Endothelial cell of umbilical vein (primary cell): ENCODE measurements at regions of chr7 and their contacts with region 1.

Region 1: GRCh38 chr7:81704595-81704994 is 65.3 kb downstream of the HGF start:
- DNase-seq: no peak
- H3K4me3 ChIP-seq: no peak overlapping the region
- H3K27ac ChIP-seq: no peak overlapping the region
- H3K4me1 ChIP-seq: peaks cover 3% of the 10 kb centered on the region
- H3K27me3 ChIP-seq: no peaks in the 10 kb centered on the region
- CTCF ChIP-seq: no peak
- POLR2A ChIP-seq: no peak

Region 2: GRCh38 chr7:81715984-81716588 is 11.5 kb after region 1 on chr7:
- CTCF ChIA-PET with region 1: interaction called, 12 read pairs
- POLR2A ChIA-PET with region 1: no interaction called
- dilution Hi-C with region 1: no loop called
- intact Hi-C with region 1: no loop called
- DNase-seq: peak; percentile 30
- H3K4me3 ChIP-seq: no peak overlapping the region
- H3K27ac ChIP-seq: no peak overlapping the region
- H3K4me1 ChIP-seq: no peaks in the 10 kb centered on the region
- H3K27me3 ChIP-seq: no peaks in the 10 kb centered on the region
- CTCF ChIP-seq: peak; percentile 13 to 26
- POLR2A ChIP-seq: no peak